SK-N-SH (cell line): ENCODE measurements at regions of chr2 and their contacts with region 1.

Region 1: DNA sequence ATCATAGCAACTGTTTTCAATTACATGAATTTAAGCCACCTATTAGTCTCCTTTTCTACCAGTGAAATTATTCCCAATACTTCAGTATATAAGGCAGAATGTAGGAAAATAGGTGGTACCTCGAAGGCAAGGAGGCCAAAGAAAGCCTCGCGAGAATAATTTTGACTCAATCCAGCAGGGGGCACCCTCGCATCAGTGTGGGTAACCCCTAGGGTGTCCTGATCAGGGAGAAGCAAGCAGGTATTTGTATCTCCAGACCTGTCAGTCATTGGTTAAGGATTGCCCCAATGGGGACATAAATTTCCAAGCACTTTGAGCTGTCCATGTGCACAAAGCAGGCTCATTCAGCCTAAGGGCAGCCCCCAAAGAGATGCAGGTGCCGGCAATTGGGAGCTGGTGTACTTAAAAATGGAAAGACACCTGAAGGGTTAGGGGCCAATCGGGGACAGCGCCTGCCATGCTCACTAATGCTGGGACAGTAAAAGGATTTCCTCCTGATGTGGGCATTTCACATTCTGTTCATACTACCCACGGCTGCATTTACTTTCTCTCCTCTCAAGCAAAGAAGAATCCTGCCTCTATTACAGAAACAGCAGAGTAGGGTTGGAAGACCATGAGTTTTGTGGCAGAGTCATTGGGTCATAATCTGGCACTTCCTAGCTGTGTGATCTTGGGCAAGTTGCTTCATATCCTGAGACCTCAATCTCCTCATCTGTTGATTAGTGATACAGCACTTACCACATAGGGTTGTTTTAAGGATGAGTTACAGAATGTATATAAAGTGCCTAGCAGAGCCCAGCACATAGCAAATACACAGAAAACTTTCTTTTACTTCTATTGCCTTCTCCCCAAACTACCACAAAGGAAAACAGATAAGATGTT is 136.1 kb downstream of the ICOS start:
- DNase-seq: peak; percentile 16
- H3K4me3 ChIP-seq: no peak overlapping the region; a peak in 1 of 4 replicates
- H3K27ac ChIP-seq: no peak overlapping the region
- H3K4me1 ChIP-seq: peaks cover 0 to 9% of the 10 kb centered on the region in 2 experiments; a peak in 2 of 4 replicates
- H3K27me3 ChIP-seq: no peaks in the 10 kb centered on the region
- CTCF ChIP-seq: peak; percentile 54
- EP300 ChIP-seq: no peak
- RAD21 ChIP-seq: peak; percentile 62

Region 2: GRCh38 chr2:203360833-203361430 is 711.8 kb before region 1 on chr2:
- CTCF ChIA-PET with region 1: no interaction called
- POLR2A ChIA-PET with region 1: no interaction called
- DNase-seq: no peak
- H3K4me3 ChIP-seq: no peak overlapping the region
- H3K27ac ChIP-seq: no peak overlapping the region
- H3K4me1 ChIP-seq: no peaks in the 10 kb centered on the region
- H3K27me3 ChIP-seq: no peaks in the 10 kb centered on the region
- CTCF ChIP-seq: no peak
- EP300 ChIP-seq: no peak
- RAD21 ChIP-seq: no peak

Region 3: DNA sequence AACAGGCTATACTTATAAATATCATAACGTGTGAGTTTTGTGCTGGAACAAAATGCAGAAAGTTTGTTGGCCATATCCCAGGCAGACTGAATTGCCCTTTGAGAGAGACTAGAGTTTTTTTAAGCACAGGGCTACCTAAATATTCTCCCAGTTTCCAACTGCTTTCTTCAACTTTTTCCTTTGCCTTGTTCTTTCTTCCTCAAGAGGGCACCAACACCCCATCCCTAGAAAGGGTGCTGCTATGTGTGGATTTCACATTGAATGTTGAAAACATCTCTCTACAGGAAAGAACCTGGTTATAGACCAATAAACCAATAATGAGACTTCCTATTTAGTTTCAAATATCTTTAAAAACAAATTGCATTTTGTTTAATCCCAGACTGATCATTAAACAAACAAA is 48.2 kb before region 1 on chr2:
- CTCF ChIA-PET with region 1: interaction called, 11 read pairs
- POLR2A ChIA-PET with region 1: no interaction called
- DNase-seq: peak; percentile 20
- H3K4me3 ChIP-seq: no peak overlapping the region
- H3K27ac ChIP-seq: no peak overlapping the region
- H3K4me1 ChIP-seq: peaks cover 0 to 24% of the 10 kb centered on the region in 2 experiments; a peak in 3 of 4 replicates
- H3K27me3 ChIP-seq: no peaks in the 10 kb centered on the region; the same call in 1 of the 2 replicates
- CTCF ChIP-seq: peak; percentile 60
- EP300 ChIP-seq: no peak
- RAD21 ChIP-seq: peak; percentile 92

Region 4: DNA sequence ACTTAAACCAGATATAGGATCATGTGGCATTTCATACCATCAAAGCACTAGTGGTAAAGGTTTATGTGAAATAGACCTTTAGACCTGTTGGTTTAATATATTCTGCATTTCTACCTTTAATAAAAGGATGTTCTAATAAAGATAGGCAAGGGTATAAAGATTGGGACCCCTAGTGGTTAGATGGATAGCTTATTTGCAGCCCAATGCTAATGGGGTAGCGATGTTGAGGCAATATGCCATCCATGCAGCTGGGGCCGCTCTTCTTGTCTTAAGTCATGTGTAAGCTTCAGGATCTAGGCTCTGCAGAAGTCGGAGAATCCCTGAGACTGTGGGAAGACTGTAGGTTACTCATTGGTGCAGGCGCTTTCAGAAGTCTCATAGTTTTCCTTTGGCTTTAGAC is 21.2 kb before region 1 on chr2:
- CTCF ChIA-PET with region 1: interaction called, 11 read pairs
- POLR2A ChIA-PET with region 1: no interaction called
- DNase-seq: no peak
- H3K4me3 ChIP-seq: no peak overlapping the region
- H3K27ac ChIP-seq: no peak overlapping the region
- H3K4me1 ChIP-seq: peaks cover 0 to 3% of the 10 kb centered on the region in 2 experiments; a peak in 1 of 4 replicates
- H3K27me3 ChIP-seq: peaks cover 6% of the 10 kb centered on the region; the same call in 1 of the 2 replicates
- CTCF ChIP-seq: peak; percentile 35; the same call in 1 of the 2 replicates
- EP300 ChIP-seq: no peak
- RAD21 ChIP-seq: no peak

Region 5: DNA sequence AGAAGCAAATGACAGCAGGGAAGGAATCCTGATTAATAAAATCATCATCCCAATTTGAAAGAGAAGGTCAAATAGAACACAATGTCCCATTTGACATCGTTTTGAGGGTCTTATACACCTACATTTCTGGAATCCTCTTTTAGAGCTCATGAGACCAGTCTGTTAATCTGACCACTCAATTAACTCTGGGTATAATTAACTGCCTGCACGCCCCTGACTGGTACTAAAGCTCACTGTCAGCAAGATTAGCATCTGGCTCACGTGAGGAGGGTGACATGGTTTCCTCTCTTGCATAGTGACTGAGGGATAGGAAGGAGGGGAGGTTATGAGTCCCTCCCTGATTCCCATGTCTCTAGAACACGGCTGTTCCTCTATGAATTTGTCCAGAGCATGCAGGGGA is 11.8 kb before region 1 on chr2:
- CTCF ChIA-PET with region 1: interaction called, 13 read pairs
- POLR2A ChIA-PET with region 1: no interaction called
- DNase-seq: peak; percentile 13
- H3K4me3 ChIP-seq: no peak overlapping the region
- H3K27ac ChIP-seq: no peak overlapping the region
- H3K4me1 ChIP-seq: peaks cover 0 to 4% of the 10 kb centered on the region in 2 experiments; a peak in 1 of 4 replicates
- H3K27me3 ChIP-seq: no peaks in the 10 kb centered on the region
- CTCF ChIP-seq: no peak
- EP300 ChIP-seq: no peak
- RAD21 ChIP-seq: no peak

Region 6: DNA sequence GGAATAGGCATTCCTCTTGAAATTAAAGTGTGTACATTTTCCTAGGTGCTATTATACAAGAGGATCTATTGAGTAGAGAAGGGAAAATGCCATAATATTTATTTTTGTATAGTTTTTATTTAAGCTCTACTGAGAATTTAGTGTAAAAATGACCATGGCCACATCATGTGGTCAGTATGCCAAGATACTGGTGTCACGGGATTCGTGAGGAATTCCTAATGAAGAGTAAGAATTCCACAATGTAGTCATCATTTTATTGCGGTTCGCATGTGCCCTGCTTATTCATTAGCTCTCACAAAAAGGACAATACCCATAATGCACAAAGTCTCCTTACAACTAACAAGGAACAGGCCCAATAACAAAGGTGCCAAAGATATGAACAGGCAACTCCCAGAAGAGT is 433.3 kb after region 1 on chr2:
- CTCF ChIA-PET with region 1: no interaction called
- POLR2A ChIA-PET with region 1: no interaction called
- DNase-seq: no peak
- H3K4me3 ChIP-seq: no peak overlapping the region
- H3K27ac ChIP-seq: no peak overlapping the region
- H3K4me1 ChIP-seq: peaks cover 0 to 5% of the 10 kb centered on the region in 2 experiments; a peak in 1 of 4 replicates
- H3K27me3 ChIP-seq: no peaks in the 10 kb centered on the region
- CTCF ChIP-seq: no peak
- EP300 ChIP-seq: no peak
- RAD21 ChIP-seq: no peak